ENCODE measurements at regions of chr4 and their contacts with region 1.

Region 1: DNA sequence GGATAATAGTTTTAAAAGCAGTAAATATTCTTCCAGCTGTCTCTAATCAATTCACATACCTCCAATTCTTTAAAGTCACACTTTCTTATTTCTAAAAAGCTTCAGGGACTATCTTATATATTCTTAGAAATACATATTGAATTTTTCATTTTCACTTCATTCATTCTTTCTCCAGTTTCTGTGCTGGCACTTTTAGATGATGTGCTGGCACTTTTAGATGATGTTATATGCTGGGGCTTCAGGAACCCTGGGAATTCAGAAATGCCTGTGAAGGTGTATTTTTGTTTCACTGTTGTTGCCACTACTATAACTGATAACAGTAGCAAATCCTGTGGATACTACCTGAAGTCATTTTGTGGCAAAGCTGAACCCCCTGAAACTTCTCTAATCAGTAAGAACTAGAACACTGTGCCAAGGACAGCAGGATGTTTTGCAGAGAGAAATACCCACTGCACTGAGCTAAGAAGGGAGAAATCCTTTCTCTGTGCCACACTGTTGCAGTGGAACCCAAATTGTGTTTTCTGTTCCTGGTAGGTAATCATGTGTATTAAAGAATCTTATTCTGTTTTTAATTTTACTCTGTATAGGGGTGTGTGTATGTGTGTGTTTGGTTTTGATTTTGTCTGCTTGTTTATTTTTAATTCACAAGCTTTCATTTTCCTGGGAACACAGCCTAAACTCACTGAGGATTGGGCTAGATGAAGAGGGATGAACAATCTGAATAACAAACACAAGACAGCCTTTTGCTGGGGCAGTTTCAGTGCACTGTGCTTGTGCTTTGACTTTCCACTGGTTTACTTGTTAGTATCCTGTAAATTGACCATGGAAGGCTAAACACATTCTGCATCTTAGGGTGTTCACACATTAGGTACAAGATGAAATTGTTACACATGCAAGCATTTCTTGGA is 898.3 kb downstream of the CCSER1 start:
- DNase-seq: no peak
- ATAC-seq: no peak

Region 2: GRCh38 chr4:90951027-90951426 is 74.5 kb before region 1 on chr4:
- intact Hi-C with region 1: no loop called
- DNase-seq: no peak
- ATAC-seq: no peak

Region 3: GRCh38 chr4:90979556-90979955 is 45.9 kb before region 1 on chr4:
- intact Hi-C with region 1: no loop called
- DNase-seq: no peak
- ATAC-seq: no peak

Region 4: DNA sequence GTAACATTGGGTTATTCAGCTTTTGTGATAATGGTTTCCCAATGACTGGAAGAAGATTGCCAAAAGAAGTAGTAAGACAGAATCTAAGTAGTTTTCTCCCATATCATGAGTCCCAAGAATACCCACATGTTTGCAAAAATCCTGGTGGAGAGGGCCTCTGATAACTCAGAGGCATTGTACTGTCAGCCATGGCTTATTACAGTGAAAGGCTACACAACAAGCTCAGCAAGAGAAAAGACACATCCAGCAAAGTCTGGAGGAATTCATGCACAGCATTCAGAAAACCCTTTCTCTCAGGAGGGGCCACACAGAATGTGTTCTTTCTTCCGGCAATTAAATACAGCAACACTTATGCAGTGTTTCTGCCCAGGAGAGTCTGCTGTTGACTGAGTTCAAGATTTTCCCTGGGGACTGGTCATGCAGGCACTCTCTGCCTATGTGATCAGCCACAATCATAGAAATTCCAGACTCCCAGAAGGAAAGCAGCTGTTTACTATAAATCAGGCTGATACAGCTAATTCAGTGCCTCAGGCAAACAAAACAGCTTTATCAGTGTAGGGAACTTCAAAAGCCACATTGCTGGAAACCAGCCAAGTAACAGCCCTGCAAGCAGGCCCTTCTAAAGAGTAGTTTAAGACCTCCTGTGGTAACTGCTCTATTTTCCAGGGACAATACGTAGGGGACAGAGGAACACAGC is 38.8 kb after region 1 on chr4:
- intact Hi-C with region 1: loop called (anchors 1 kb)
- DNase-seq: no peak
- ATAC-seq: no peak